ENCODE measurements at regions of chr2 and their contacts with region 1.

Region 1: GRCh38 chr2:158990397-158991209 is 22.2 kb downstream of the TANC1 start:
- DNase-seq: peak; percentile 32 to 95
- H3K4me3 ChIP-seq: no peak overlapping the region
- H3K27ac ChIP-seq: peak overlapping the region; percentile 78
- H3K4me1 ChIP-seq: peaks cover 71% of the 10 kb centered on the region
- H3K27me3 ChIP-seq: no peaks in the 10 kb centered on the region
- CTCF ChIP-seq: no peak

Region 2: DNA sequence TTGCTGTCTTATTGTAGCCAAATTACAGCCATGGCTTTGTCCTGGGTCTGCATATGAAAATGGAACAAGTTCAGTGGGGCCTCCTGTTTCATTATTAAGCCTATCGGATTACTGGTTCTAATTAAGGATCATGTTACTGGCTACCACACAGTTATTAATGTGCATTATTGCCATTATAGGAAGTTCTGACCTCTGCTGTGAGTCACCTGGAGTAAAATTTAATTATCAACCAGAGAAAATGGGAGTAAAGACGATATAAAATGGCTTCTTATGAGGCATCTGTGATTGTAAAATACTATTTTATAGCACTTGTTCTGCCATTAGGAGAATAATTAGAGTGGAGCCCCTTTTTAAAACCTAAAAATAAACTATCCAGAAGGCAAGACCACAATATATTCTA is 1352.8 kb after region 1 on chr2:
- CTCF ChIA-PET with region 1: interaction called, 12 read pairs
- POLR2A ChIA-PET with region 1: no interaction called
- intact Hi-C with region 1: no loop called
- DNase-seq: no peak
- H3K4me3 ChIP-seq: no peak overlapping the region
- H3K27ac ChIP-seq: no peak overlapping the region
- H3K4me1 ChIP-seq: no peaks in the 10 kb centered on the region; the same call in 1 of the 2 replicates
- H3K27me3 ChIP-seq: no peaks in the 10 kb centered on the region
- CTCF ChIP-seq: no peak